Endothelial cell of umbilical vein (primary cell): ENCODE measurements at regions of chr12 and their contacts with region 1.

Region 1: GRCh38 chr12:105934274-105934673 is 204.5 kb downstream of the NUAK1 start:
- DNase-seq: peak; percentile 96
- H3K4me3 ChIP-seq: no peak overlapping the region
- H3K27ac ChIP-seq: peak overlapping the region; percentile 90
- H3K4me1 ChIP-seq: peaks cover 35% of the 10 kb centered on the region
- H3K27me3 ChIP-seq: no peaks in the 10 kb centered on the region
- CTCF ChIP-seq: no peak
- POLR2A ChIP-seq: no peak

Region 2: DNA sequence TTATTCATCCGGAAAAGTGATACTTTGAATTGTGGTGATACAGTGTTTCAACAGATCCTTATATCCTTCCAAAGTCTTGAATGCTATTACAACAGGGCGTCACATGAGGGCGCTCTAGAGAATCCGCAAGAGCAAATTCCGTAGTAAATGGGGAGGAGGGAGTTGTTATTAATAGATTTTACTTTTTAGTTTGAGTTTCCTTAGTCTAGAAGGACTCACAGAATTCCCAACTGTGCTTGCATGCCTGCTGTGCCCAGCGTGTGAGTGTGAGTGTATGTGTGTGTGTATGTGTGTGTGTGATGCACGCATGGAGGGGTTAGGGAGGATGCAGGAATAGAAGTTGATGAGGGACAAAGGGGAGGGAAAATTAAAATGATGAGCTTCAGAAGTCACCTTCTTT is 228.5 kb before region 1 on chr12:
- CTCF ChIA-PET with region 1: interaction called, 4 read pairs
- POLR2A ChIA-PET with region 1: no interaction called
- dilution Hi-C with region 1: no loop called
- intact Hi-C with region 1: loop called (anchors 2 kb)
- DNase-seq: peak; percentile 77
- H3K4me3 ChIP-seq: no peak overlapping the region
- H3K27ac ChIP-seq: no peak overlapping the region
- H3K4me1 ChIP-seq: peaks cover 9% of the 10 kb centered on the region
- H3K27me3 ChIP-seq: peaks cover 4 to 7% of the 10 kb centered on the region in 2 experiments
- CTCF ChIP-seq: peak; percentile 63 to 65
- POLR2A ChIP-seq: no peak

Region 3: GRCh38 chr12:105967038-105967776 is 32.9 kb after region 1 on chr12:
- CTCF ChIA-PET with region 1: no interaction called
- POLR2A ChIA-PET with region 1: no interaction called
- dilution Hi-C with region 1: no loop called
- intact Hi-C with region 1: loop called (anchors 2 kb)
- DNase-seq: peak; percentile 18
- H3K4me3 ChIP-seq: no peak overlapping the region
- H3K27ac ChIP-seq: peak overlapping the region; percentile 18
- H3K4me1 ChIP-seq: peaks cover 4% of the 10 kb centered on the region
- H3K27me3 ChIP-seq: no peaks in the 10 kb centered on the region
- CTCF ChIP-seq: no peak
- POLR2A ChIP-seq: no peak

Region 4: GRCh38 chr12:106022568-106023012 is 88.3 kb after region 1 on chr12:
- CTCF ChIA-PET with region 1: interaction called, 4 read pairs
- POLR2A ChIA-PET with region 1: no interaction called
- dilution Hi-C with region 1: no loop called
- intact Hi-C with region 1: loop called (anchors 1 kb)
- DNase-seq: peak; percentile 13
- H3K4me3 ChIP-seq: no peak overlapping the region
- H3K27ac ChIP-seq: no peak overlapping the region
- H3K4me1 ChIP-seq: peaks cover 22% of the 10 kb centered on the region
- H3K27me3 ChIP-seq: no peaks in the 10 kb centered on the region
- CTCF ChIP-seq: no peak
- POLR2A ChIP-seq: no peak

Region 5: GRCh38 chr12:106030210-106031175 is 96.2 kb after region 1 on chr12:
- CTCF ChIA-PET with region 1: interaction called, 4 read pairs
- POLR2A ChIA-PET with region 1: no interaction called
- dilution Hi-C with region 1: no loop called
- intact Hi-C with region 1: loop called (anchors 1 kb)
- DNase-seq: peak; percentile 83
- H3K4me3 ChIP-seq: peak overlapping the region in 1 of 3 experiments; percentile 18
- H3K27ac ChIP-seq: peak overlapping the region; percentile 97
- H3K4me1 ChIP-seq: peaks cover 25% of the 10 kb centered on the region
- H3K27me3 ChIP-seq: no peaks in the 10 kb centered on the region
- CTCF ChIP-seq: no peak
- POLR2A ChIP-seq: no peak

Region 6: DNA sequence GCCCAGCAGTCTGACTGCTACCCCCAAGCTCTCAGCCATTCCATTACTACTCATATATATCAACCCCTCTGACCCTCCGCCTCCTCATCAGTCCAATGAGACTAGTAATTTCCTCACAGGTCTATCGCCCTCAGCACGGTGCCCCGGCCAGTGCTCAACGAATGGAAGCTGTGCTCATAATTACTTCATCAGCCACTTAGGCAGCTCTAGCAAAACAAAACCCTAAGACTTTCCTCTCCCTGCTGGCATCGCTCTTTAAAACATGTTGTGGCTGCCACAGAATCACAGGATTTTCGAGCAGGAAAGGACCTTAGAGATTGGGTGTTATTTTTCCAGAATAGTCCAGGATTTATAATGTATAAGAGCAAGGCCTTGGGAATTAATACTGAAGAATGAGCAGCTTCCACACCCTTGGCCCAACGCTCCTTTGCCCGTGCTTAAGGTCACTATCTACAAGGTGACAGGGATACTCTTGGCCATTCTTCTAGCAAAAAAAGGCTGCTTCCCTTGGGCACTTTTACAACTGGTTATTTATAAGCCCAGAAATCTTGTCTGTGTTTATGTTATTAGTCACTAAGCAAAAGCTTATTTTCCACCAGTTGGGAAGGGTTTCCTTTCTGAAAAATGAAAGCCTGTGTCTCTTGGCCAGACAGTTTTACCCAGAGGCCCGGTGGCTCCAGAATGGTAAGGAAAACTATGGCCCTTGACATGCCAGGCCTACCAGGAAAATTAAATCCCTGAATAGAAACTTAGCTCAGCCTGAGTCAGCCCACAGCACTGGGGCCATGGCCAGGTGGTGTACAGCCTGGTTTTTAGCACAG is 156.5 kb after region 1 on chr12:
- CTCF ChIA-PET with region 1: no interaction called
- POLR2A ChIA-PET with region 1: no interaction called
- dilution Hi-C with region 1: no loop called
- intact Hi-C with region 1: loop called (anchors 5 kb)
- DNase-seq: peak; percentile 96
- H3K4me3 ChIP-seq: no peak overlapping the region
- H3K27ac ChIP-seq: peak overlapping the region; percentile 86
- H3K4me1 ChIP-seq: peaks cover 23% of the 10 kb centered on the region
- H3K27me3 ChIP-seq: no peaks in the 10 kb centered on the region
- CTCF ChIP-seq: no peak
- POLR2A ChIP-seq: no peak